ENCODE measurements at regions of chr12 and their contacts with region 1.

Region 1: DNA sequence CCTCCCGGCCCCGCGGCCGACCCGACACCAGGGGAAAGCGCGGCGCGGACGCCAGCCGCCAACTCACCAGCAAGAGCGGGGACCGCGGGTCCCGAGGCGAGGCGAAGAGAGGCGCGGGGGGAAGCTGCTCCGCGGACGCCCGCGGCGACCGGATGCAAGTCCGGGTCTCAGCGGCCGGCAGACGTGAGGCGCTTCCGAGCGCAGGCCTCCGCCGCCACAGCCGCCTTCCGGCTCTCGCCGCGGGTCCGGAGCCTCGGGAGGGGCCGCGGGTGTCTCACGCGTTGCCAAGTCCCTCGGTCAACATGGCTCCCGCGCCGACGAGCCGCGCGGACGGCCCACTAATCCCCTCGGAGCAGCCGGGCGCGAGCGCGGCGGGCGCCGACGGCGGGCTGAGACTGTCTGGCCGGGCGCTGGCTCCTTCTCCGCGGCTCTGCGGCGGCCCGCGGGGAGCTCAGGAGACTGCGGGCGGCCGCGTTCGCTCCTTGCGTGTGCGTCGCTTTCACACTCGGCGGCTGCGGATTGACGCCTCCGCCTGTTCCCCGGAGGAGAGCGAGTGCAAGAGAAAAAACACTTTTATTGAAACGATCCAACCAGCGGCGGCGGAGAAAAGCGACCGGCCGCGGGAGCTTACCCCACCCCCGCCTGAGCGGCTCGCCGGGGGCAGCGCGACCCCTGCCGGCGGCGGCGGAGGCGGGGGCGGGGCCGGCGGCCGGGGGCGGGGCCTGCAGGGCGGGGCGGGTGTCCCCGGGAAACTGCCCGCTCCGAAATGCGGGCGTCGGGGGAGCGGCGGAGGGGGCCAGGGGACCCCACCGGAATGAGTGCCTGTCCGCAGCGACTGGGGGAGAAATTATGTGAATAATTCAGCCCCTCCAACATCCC is at the start of gene CDK17:
- DNase-seq: peak; percentile 87 to 93 (median 90)
- ATAC-seq: peak; percentile 87
- H3K4me3 ChIP-seq: peak within 1 kb of the TSS; percentile 82
- H3K4me3 Mint-ChIP-seq: peak within 1 kb of the TSS; percentile 94 to 98 (median 96)
- H3K27ac ChIP-seq: peak within 1 kb of the TSS; percentile 98
- H3K27ac Mint-ChIP-seq: peak within 1 kb of the TSS; percentile 96 to 99 (median 97)
- H3K4me1 ChIP-seq: peaks cover 19 to 22% of the 10 kb centered on the region in 2 donors
- H3K4me1 Mint-ChIP-seq: peaks cover 32 to 50% (median 44%) of the 10 kb centered on the region in 7 donors
- H3K27me3 ChIP-seq: no peaks in the 10 kb centered on the region
- H3K27me3 Mint-ChIP-seq: no peaks in the 10 kb centered on the region
- total RNA-seq, gene CDK17: 39.7 to 112 (median 67.9) TPM

Region 2: DNA sequence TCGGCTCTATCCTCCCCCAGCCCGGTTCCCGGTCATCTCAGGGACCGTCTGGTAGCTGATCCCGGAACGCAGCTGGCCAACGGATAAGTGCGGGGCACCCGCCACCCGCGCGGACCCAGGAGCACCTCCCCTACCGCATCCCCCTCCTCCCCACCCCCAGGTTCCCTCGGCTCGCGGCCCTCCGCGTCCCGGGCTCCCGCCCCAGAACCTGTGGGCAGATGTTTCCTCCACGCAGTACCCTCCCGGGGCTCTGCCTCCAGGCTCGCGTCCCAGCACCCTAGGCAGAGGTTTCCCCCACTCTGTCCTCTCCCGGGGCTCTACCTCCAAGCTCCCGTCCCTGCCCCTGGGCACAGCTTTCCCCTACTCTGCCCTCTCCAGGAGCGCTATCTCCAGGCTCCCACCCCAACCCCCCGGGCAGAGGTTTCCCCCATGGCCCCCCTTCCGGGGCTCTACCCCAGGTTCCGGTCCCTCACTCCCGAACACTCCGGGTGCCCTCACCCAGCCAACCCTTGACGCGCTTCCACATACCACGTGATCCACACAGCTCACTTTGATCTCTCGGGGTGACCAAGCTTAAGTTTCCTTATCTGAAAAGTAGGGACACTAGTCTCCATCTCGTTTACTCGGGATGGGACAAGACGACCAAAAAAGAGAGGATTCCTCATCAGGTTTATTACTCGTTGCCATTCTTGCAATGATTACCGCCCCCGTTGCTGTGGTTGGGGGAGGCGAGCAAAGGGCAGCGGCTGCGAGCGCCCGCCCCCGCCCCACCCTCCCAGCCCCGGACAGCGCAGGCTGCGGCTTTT is 457.4 kb before region 1 on chr12 and contains the start of gene CCDC38:
- CTCF ChIA-PET with region 1: no interaction called
- POLR2A ChIA-PET with region 1: no interaction called
- intact Hi-C with region 1: loop called (anchors 2 kb)
- DNase-seq: peak; percentile 56 to 86 (median 82)
- ATAC-seq: peak; percentile 97
- H3K4me3 ChIP-seq: peak within 1 kb of the TSS; percentile 93
- H3K4me3 Mint-ChIP-seq: peak within 1 kb of the TSS; percentile 88 to 99 (median 96)
- H3K27ac ChIP-seq: peak within 1 kb of the TSS; percentile 86
- H3K27ac Mint-ChIP-seq: peak within 1 kb of the TSS; percentile 85 to 97 (median 89)
- H3K4me1 ChIP-seq: peaks cover 6% of the 10 kb centered on the region in 2 donors
- H3K4me1 Mint-ChIP-seq: peaks cover 4 to 12% (median 10%) of the 10 kb centered on the region in 7 donors
- H3K27me3 ChIP-seq: no peaks in the 10 kb centered on the region
- H3K27me3 Mint-ChIP-seq: peaks cover 0 to 26% (median 0%) of the 10 kb centered on the region in 5 donors
- total RNA-seq, gene CCDC38: 0.07 to 0.27 TPM in 2 of 5 experiments, not detected in the others

Region 3: DNA sequence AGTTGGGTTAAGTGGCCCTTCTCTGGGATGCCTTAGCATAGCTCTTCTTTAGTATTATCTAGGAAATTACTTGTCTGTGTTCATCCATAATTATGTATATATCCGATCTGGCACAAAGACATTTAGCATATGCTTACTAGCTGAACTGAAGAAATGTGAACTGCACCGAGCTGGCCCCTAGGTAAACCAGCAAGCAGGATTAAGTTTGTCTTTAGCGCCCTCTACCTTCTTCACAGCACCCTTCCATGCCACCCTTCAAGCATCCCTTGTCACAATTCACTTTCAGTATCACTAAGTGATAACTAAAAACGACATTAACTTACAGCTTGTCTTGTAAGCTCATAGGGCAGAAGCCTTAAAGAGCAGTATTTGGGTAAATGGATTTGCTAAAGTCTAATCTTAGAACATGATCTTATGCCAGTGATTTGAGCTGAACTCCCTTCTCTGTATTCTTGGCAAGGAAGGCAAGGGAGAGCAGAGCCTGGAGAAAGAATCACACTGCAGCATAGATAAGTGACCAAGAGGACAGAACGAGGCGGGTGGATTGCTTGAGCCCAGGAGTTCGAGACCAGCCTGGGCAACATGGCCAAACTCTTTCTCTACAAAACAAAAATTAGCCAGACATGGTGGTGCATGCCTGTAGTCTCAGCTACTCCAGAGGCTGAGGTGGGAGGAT is 401.4 kb before region 1 on chr12:
- CTCF ChIA-PET with region 1: no interaction called
- POLR2A ChIA-PET with region 1: no interaction called
- intact Hi-C with region 1: no loop called
- DNase-seq: peak in 7 of 9 donors; percentile 44 to 69 (median 58)
- ATAC-seq: peak; percentile 96
- H3K4me3 ChIP-seq: no peak overlapping the region
- H3K4me3 Mint-ChIP-seq: peak overlapping the region in 1 of 10 donors; percentile 11
- H3K27ac ChIP-seq: no peak overlapping the region
- H3K27ac Mint-ChIP-seq: peak overlapping the region in 5 of 9 donors; percentile 2 to 68 (median 16)
- H3K4me1 ChIP-seq: no peaks in the 10 kb centered on the region
- H3K4me1 Mint-ChIP-seq: peaks cover 0 to 13% (median 3%) of the 10 kb centered on the region in 7 donors
- H3K27me3 ChIP-seq: no peaks in the 10 kb centered on the region
- H3K27me3 Mint-ChIP-seq: no peaks in the 10 kb centered on the region

Region 4: GRCh38 chr12:96208801-96209549 is 191.2 kb before region 1 on chr12:
- CTCF ChIA-PET with region 1: interaction called, 6 read pairs
- POLR2A ChIA-PET with region 1: interaction called, 12 read pairs
- intact Hi-C with region 1: loop called in 1 of 2 experiments (anchors 2 kb)
- DNase-seq: no peak
- ATAC-seq: peak; percentile 15
- H3K4me3 ChIP-seq: no peak overlapping the region
- H3K4me3 Mint-ChIP-seq: peak overlapping the region; percentile 69 to 97 (median 85)
- H3K27ac ChIP-seq: peak overlapping the region; percentile 62
- H3K27ac Mint-ChIP-seq: peak overlapping the region; percentile 50 to 99 (median 96)
- H3K4me1 ChIP-seq: peaks cover 64 to 93% of the 10 kb centered on the region in 2 donors
- H3K4me1 Mint-ChIP-seq: peaks cover 70 to 100% (median 98%) of the 10 kb centered on the region in 7 donors
- H3K27me3 ChIP-seq: no peaks in the 10 kb centered on the region
- H3K27me3 Mint-ChIP-seq: no peaks in the 10 kb centered on the region

Region 5: GRCh38 chr12:96303653-96304052 is 96.5 kb before region 1 on chr12:
- CTCF ChIA-PET with region 1: interaction called, 10 read pairs
- POLR2A ChIA-PET with region 1: interaction called, 10 read pairs
- intact Hi-C with region 1: loop called (anchors 2 to 5 kb)
- DNase-seq: no peak
- ATAC-seq: no peak
- H3K4me3 ChIP-seq: no peak overlapping the region
- H3K4me3 Mint-ChIP-seq: no peak overlapping the region
- H3K27ac ChIP-seq: no peak overlapping the region
- H3K27ac Mint-ChIP-seq: no peak overlapping the region
- H3K4me1 ChIP-seq: no peaks in the 10 kb centered on the region
- H3K4me1 Mint-ChIP-seq: peaks cover 8 to 45% (median 30%) of the 10 kb centered on the region in 7 donors
- H3K27me3 ChIP-seq: no peaks in the 10 kb centered on the region
- H3K27me3 Mint-ChIP-seq: no peaks in the 10 kb centered on the region

Region 6: GRCh38 chr12:96343347-96343954 is 56.7 kb before region 1 on chr12:
- CTCF ChIA-PET with region 1: interaction called, 14 read pairs
- POLR2A ChIA-PET with region 1: interaction called, 25 read pairs
- intact Hi-C with region 1: loop called in 1 of 2 experiments (anchors 2 kb)
- DNase-seq: no peak
- ATAC-seq: peak; percentile 65
- H3K4me3 ChIP-seq: no peak overlapping the region
- H3K4me3 Mint-ChIP-seq: peak overlapping the region in 7 of 10 donors; percentile 22 to 64 (median 61)
- H3K27ac ChIP-seq: no peak overlapping the region
- H3K27ac Mint-ChIP-seq: peak overlapping the region in 5 of 9 donors; percentile 22 to 71 (median 48)
- H3K4me1 ChIP-seq: peaks cover 10 to 15% of the 10 kb centered on the region in 2 donors
- H3K4me1 Mint-ChIP-seq: peaks cover 37 to 70% (median 61%) of the 10 kb centered on the region in 7 donors
- H3K27me3 ChIP-seq: no peaks in the 10 kb centered on the region
- H3K27me3 Mint-ChIP-seq: no peaks in the 10 kb centered on the region

Region 7: DNA sequence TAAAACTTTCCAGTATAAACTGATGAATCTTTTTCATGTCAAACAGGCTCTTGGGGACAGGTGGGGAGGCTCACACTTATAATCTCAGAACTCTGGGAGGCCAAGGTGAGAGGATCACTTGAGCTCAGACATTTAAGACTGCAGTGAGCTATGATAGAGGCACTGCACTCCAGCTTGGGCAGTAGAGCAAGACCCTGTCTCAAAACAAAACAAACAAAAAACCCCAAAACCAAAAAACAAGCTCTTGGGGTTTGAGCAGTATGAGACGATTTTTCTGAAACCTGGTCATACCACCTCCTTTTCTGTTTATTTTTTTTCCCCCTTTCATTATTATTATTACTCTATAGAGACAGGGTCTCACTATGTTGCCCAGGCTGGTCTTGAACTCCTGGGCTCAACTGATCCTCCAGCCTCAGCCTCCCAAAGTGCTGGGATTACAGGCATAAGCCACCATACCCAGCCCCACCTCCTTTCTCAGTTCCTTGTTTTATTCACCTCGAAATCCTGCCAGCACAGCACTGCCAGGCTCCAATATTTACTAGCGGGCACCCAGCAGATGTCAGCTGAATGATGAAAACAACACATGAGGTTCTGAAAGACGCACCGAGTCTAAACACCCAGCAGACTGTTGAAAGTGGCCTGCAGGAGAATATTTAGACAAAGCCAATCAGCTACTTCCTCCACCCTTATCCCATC is 19.6 kb after region 1 on chr12:
- CTCF ChIA-PET with region 1: interaction called, 3 read pairs
- POLR2A ChIA-PET with region 1: interaction called, 8 read pairs
- intact Hi-C with region 1: loop called in 1 of 2 experiments (anchors 1 kb)
- DNase-seq: no peak
- ATAC-seq: no peak
- H3K4me3 ChIP-seq: no peak overlapping the region
- H3K4me3 Mint-ChIP-seq: peak overlapping the region in 1 of 10 donors; percentile 83
- H3K27ac ChIP-seq: no peak overlapping the region
- H3K27ac Mint-ChIP-seq: peak overlapping the region; percentile 32 to 92 (median 73)
- H3K4me1 ChIP-seq: peaks cover 0 to 7% of the 10 kb centered on the region in 2 donors
- H3K4me1 Mint-ChIP-seq: peaks cover 0 to 42% (median 25%) of the 10 kb centered on the region in 7 donors
- H3K27me3 ChIP-seq: no peaks in the 10 kb centered on the region
- H3K27me3 Mint-ChIP-seq: no peaks in the 10 kb centered on the region

Region 8: DNA sequence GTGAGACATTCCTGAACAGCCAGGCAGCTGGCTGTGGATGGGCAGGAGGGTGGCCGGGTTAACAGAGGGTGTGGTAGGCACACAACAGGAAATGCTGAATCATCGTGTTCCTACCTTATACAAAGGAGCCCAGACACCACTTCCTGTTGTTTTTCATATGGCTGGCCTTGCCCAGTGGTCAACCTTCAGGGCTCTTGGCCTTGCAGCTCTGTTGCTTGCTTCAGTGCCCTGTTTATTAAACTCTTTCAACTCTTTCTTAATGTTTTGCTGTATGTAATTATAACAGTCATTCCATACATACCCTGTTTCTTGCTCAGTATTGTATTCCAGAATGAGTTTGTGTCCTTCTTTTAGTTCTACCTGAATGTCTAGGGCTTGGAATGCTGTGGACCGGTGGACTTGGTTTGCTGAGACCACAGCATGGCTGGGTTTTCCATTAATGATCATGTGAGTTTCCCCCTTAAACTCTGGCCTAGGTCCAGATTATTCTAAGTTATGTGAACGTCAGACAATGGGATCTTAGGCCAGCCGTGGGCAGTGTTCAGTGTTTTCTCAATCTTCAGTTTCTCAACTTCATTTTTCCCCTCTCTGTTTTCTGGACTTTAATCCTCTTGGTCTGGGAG is 101.1 kb after region 1 on chr12:
- CTCF ChIA-PET with region 1: interaction called, 3 read pairs
- POLR2A ChIA-PET with region 1: interaction called, 7 read pairs
- intact Hi-C with region 1: loop called (anchors 1 to 5 kb)
- DNase-seq: peak in 1 of 9 donors; percentile 29
- ATAC-seq: peak; percentile 80
- H3K4me3 ChIP-seq: no peak overlapping the region
- H3K4me3 Mint-ChIP-seq: peak overlapping the region in 9 of 10 donors; percentile 18 to 66 (median 48)
- H3K27ac ChIP-seq: no peak overlapping the region
- H3K27ac Mint-ChIP-seq: peak overlapping the region; percentile 28 to 89 (median 63)
- H3K4me1 ChIP-seq: peaks cover 22 to 35% of the 10 kb centered on the region in 2 donors
- H3K4me1 Mint-ChIP-seq: peaks cover 29 to 60% (median 42%) of the 10 kb centered on the region in 7 donors
- H3K27me3 ChIP-seq: no peaks in the 10 kb centered on the region
- H3K27me3 Mint-ChIP-seq: no peaks in the 10 kb centered on the region